GM18951 (cell line): ENCODE measurements at regions of chr16 and their contacts with region 1.

Region 1: DNA sequence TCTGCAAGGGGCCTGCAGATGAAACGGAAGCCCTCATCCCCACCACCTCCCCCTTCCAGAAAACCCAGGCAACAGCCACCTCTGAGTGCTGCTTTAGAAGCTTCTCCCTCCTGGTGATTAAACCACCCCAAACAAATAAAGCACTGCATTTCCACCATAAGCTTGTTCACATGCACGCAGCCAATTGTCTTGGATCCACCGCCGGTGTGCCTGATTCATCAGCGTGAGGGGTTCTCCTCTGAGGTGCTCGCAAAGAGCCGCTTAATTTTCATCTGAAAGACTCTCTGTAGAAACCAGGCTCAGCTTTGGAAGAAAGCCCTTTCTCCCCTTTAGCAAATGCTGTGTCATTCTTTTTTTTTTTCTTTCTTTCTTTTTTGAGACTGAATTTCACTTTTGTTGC is 155.2 kb upstream of the EEF2KMT start:
- POLR2A ChIP-seq: no peak

Region 2: GRCh38 chr16:4787627-4788482 is 464.9 kb before region 1 on chr16 and contains the start of gene SEPTIN12:
- in situ Hi-C with region 1: no loop called
- POLR2A ChIP-seq: no peak

Region 3: GRCh38 chr16:5393070-5393469 is 140.3 kb after region 1 on chr16:
- in situ Hi-C with region 1: no loop called
- POLR2A ChIP-seq: no peak

Region 4: DNA sequence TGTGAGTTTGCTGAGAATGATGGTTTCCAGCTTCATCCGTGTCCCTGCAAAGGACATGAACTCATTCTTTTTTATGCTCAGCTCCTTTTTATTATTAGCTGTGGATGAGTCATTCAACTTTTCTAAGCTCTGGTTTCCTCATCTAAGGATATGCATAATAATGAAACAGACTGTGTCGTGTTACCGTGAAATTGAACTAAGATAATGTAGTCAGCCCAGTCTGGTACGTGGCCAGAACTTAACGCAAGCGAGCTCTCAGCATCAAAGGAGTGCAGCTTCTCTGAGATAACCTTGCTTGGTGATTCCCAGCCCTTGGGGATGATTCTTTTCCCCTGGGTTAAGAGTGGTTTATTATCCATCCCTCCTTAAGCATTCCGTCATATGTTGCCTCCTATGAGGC is 299.1 kb after region 1 on chr16:
- in situ Hi-C with region 1: no loop called
- POLR2A ChIP-seq: no peak

Region 5: GRCh38 chr16:6643080-6643686 is 1390.4 kb after region 1 on chr16:
- in situ Hi-C with region 1: loop called (anchors 25 kb)
- POLR2A ChIP-seq: no peak